GM23248 (cell line): ENCODE measurements at regions of chr3 and their contacts with region 1.

Region 1: GRCh38 chr3:11385891-11386290 is 113.7 kb downstream of the ATG7 start:
- DNase-seq: no peak
- H3K4me3 ChIP-seq: no peak overlapping the region
- H3K27ac ChIP-seq: no peak overlapping the region
- H3K4me1 ChIP-seq: peaks cover 13% of the 10 kb centered on the region; the same call in 1 of the 2 replicates
- H3K27me3 ChIP-seq: no peaks in the 10 kb centered on the region

Region 2: DNA sequence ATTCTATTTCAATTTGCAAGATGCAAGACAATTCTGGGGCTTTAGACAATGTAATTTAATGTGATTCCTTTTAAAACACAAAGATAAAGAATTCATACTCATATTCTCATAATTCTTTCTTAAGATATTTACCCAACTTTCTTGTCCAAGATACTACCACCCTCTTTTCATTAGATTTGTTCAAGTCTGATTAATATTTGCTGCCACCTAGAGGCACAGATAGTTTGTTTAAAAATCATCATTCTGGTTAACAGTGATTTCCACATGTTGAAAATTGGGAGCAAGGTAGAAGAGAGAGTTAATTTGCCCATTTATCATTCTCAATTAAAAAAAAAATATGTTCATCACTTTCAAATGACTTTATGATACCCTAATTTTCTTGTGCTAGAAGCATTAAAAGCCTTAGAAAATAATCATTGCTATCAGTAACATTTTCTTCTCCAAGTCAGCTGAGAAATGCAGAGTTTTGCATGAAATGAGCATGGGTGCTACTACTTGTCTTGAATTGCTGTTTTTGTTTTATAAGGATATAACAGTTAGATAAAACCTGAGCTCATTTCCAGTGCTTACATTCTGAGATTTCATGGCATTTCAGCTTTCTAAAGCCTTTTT is 449.2 kb after region 1 on chr3:
- in situ Hi-C with region 1: loop called (anchors 10 kb)
- DNase-seq: peak; percentile 58
- H3K4me3 ChIP-seq: no peak overlapping the region
- H3K27ac ChIP-seq: no peak overlapping the region
- H3K4me1 ChIP-seq: no peaks in the 10 kb centered on the region
- H3K27me3 ChIP-seq: no peaks in the 10 kb centered on the region